ENCODE measurements at regions of chr17 and their contacts with region 1.

Region 1: GRCh38 chr17:1055751-1056645 is 59.1 kb downstream of the TIMM22 start:
- DNase-seq: peak; percentile 84
- ATAC-seq: peak; percentile 91
- H3K4me3 Mint-ChIP-seq: no peak overlapping the region
- H3K27ac Mint-ChIP-seq: no peak overlapping the region
- H3K4me1 Mint-ChIP-seq: no peaks in the 10 kb centered on the region
- H3K27me3 Mint-ChIP-seq: no peaks in the 10 kb centered on the region
- CTCF ChIP-seq: peak; percentile 73

Region 2: GRCh38 chr17:979538-980405 is 76.2 kb before region 1 on chr17 and contains the start of gene NXN:
- CTCF ChIA-PET with region 1: interaction called, 35 read pairs
- POLR2A ChIA-PET with region 1: no interaction called
- DNase-seq: peak; percentile 83
- ATAC-seq: peak; percentile 74
- H3K4me3 Mint-ChIP-seq: peak within 1 kb of the TSS; percentile 93
- H3K27ac Mint-ChIP-seq: peak within 1 kb of the TSS; percentile 96; the same call in 1 of the 2 replicates
- H3K4me1 Mint-ChIP-seq: peaks cover 37% of the 10 kb centered on the region
- H3K27me3 Mint-ChIP-seq: no peaks in the 10 kb centered on the region
- CTCF ChIP-seq: no peak
- total RNA-seq, gene NXN: 96.8 to 100 TPM (median 98.7 TPM) in 3 replicates

Region 3: GRCh38 chr17:1022278-1023024 is 33.5 kb before region 1 on chr17:
- CTCF ChIA-PET with region 1: interaction called, 14 read pairs
- POLR2A ChIA-PET with region 1: no interaction called
- DNase-seq: no peak
- ATAC-seq: 0 out of 2 replicates have a peak, but pooled peaks have one; percentile 33
- H3K4me3 Mint-ChIP-seq: no peak overlapping the region
- H3K27ac Mint-ChIP-seq: 0 out of 2 replicates have a peak overlapping the region, but pooled peaks have one; percentile 15
- H3K4me1 Mint-ChIP-seq: no peaks in the 10 kb centered on the region
- H3K27me3 Mint-ChIP-seq: no peaks in the 10 kb centered on the region
- CTCF ChIP-seq: no peak

Region 4: DNA sequence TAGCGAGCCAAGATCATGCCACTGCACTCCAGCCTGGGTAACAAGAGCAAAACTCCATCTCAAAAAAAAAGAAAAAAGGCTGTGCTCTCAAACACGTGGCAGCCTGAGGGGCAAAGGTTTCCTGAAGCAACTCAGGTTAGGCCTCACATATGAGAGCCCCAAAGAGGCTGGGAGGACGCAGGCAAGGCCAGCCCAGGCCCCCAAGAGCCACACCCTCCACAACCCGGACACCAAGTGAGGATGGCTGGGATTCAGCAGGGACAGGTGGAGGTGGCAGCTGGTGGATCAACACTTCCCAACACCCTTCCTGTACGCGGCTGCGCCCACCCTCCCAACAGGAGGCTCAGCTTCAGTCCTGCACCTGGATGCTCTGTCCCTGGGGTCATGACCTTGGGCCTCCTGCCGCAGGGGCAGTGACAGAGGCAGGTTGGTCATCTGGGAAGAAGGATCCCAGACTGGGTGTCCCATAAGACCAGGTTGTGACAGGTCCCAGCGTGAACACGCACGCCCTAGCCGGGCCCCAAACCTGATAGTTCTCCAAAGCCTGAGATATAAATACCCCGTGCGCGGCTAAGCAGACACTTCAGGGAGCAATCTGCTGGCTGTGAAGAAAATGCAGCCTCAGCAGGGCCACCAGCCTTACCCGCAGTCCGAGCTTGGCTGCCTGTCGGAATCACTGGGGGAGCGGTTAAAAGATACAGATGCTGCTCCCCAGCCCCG is 19.0 kb after region 1 on chr17:
- CTCF ChIA-PET with region 1: interaction called, 40 read pairs
- POLR2A ChIA-PET with region 1: no interaction called
- DNase-seq: no peak
- ATAC-seq: no peak
- H3K4me3 Mint-ChIP-seq: no peak overlapping the region
- H3K27ac Mint-ChIP-seq: no peak overlapping the region
- H3K4me1 Mint-ChIP-seq: peaks cover 18% of the 10 kb centered on the region
- H3K27me3 Mint-ChIP-seq: peaks cover 17% of the 10 kb centered on the region
- CTCF ChIP-seq: no peak

Region 5: DNA sequence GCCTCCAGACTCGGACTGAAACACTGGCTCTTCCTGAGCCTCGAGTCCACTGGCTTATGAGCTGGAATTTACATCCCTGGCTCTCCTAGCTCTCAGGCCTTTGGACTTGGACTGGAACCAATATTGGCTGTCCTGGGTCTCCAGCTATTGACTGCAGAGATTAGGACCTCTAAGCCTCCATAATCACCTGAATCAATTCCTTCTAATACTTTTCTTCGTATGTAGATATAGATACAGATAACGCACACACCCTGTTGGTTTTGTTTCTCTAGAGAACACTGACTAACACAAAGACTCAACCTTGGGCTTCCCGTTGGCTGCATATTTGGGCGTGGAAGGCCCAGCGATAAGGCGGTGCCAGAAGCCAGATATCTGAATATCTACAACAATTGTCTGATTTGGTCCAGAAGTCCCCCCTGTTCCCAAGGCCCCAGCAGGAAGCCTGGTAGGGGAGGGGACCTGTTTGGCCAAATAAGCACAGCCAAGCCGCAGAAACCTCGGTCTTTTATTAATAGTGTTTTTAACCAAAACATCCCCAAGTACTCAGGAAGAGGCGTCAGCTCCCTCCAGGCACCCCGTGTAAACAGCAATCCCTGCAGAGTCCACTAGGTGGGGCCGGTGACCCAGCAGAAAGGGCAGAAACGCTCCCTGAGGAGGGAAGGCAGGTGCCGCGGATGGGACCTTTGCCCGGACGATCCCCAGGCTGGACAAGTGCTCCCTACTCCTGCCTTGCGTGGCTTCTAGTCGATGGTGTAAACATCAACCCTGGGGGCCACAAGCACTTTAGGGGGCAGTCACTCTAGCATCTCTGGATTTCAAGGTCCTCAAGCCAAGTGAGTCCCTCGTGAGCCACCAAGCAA is 66.8 kb after region 1 on chr17:
- CTCF ChIA-PET with region 1: interaction called, 30 read pairs
- POLR2A ChIA-PET with region 1: no interaction called
- DNase-seq: peak; percentile 91
- ATAC-seq: peak; percentile 90
- H3K4me3 Mint-ChIP-seq: no peak overlapping the region
- H3K27ac Mint-ChIP-seq: no peak overlapping the region
- H3K4me1 Mint-ChIP-seq: peaks cover 8% of the 10 kb centered on the region
- H3K27me3 Mint-ChIP-seq: peaks cover 2% of the 10 kb centered on the region
- CTCF ChIP-seq: peak; percentile 66

Region 6: GRCh38 chr17:1186923-1187771 is 131.1 kb after region 1 on chr17:
- CTCF ChIA-PET with region 1: interaction called, 20 read pairs
- POLR2A ChIA-PET with region 1: no interaction called
- DNase-seq: peak; percentile 90
- ATAC-seq: peak; percentile 94
- H3K4me3 Mint-ChIP-seq: peak overlapping the region; percentile 30; the same call in 1 of the 2 replicates
- H3K27ac Mint-ChIP-seq: no peak overlapping the region; the same call in 1 of the 2 replicates
- H3K4me1 Mint-ChIP-seq: peaks cover 14% of the 10 kb centered on the region
- H3K27me3 Mint-ChIP-seq: peaks cover 24% of the 10 kb centered on the region
- CTCF ChIP-seq: peak; percentile 92

Region 7: GRCh38 chr17:1566545-1567199 is 510.7 kb after region 1 on chr17:
- CTCF ChIA-PET with region 1: no interaction called
- POLR2A ChIA-PET with region 1: no interaction called
- DNase-seq: no peak
- ATAC-seq: no peak
- H3K4me3 Mint-ChIP-seq: no peak overlapping the region
- H3K27ac Mint-ChIP-seq: peak overlapping the region; percentile 87
- H3K4me1 Mint-ChIP-seq: peaks cover 35% of the 10 kb centered on the region
- H3K27me3 Mint-ChIP-seq: peaks cover 10% of the 10 kb centered on the region
- CTCF ChIP-seq: no peak

Measured in WTC11 (cell line).